Aorta (tissue), 5 donors: ENCODE measurements at regions of chr12 and their contacts with region 1.

Region 1: DNA sequence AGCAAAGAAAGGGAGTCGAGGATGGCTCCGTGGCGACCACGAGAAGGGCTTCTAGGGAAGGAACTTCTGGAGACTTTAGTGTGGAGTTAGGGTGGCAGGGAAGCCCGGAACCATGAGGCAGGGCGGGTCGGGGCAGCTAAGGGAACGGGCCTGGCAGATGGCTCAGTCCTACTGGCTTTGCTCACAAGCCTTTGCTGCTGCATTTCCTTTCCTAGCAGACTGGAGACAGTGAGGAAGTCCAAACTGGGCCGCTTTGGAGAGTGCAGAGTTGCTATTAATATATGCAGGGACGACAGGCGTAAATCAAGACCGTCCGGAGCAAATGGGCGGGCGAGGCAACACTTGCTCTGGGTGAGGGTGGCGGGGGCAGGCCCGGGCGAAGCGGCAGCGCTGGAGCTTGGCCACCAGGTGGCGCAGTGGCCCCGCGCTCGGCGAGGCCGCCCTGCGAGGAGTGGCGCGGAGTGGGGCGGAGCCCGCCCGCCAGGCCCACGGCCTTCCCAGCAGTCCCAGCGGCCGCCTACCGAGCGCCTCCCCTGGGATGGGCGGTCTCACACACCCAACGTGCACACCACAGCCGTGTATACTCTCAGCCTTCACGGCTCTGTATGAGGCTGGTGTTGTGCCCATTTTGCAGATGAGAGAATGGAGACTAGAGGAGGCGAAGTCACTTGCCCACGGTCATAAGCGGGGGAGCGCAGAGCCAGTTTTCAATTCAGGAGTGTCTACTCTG is 24.4 kb upstream of the LRTM2 start:
- DNase-seq: peak; percentile 97 to 98
- ATAC-seq: peak; percentile 96
- H3K4me3 ChIP-seq: peak overlapping the region; percentile 29
- H3K27ac ChIP-seq: no peak overlapping the region
- H3K4me1 ChIP-seq: no peaks in the 10 kb centered on the region
- H3K27me3 ChIP-seq: no peaks in the 10 kb centered on the region

Region 2: GRCh38 chr12:1830981-1831963 is 35.3 kb after region 1 on chr12:
- intact Hi-C with region 1: no loop called
- DNase-seq: peak; percentile 72 to 82
- ATAC-seq: peak; percentile 36
- H3K4me3 ChIP-seq: no peak overlapping the region
- H3K27ac ChIP-seq: no peak overlapping the region
- H3K4me1 ChIP-seq: no peaks in the 10 kb centered on the region
- H3K27me3 ChIP-seq: no peaks in the 10 kb centered on the region

Region 3: DNA sequence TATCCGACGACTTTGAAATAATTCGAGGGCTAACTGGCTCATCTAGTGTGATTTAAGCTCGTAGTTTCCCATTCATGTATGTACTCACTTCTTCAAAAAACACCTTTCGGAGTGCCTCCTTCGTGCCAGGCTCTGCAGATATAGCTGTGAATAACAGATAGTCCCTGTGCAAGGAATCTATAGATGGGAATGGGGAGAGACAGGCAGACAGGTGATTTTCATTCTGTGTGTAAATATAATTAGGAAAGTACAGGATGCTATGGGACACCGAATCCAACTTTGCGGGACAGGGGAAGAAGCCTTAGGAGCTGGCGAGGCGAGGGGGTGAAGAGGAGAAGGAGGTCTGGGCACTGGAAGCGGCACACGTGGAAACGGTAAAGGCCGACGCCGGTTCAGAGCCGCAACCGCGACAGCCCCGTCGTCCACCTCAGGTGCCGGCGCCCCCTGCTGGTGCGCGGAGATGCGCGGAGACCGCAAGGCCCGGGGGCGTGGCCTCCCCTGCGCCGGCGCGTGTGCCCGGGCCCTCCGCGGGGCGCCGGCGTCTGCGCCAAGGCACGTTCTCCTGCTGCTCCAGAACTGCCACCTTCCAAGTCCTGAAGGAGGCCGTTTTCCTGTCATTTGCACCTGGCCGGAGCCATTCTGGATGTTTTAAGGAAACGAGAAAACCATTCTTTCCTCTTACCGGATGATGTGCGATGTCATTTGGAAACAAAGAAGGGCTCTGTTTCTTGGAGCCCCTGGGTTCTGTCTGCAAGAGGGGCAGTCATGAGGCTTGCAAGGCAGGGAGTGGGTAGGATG is 238.9 kb after region 1 on chr12:
- intact Hi-C with region 1: loop called (anchors 1 to 5 kb)
- DNase-seq: peak; percentile 92 to 98
- ATAC-seq: peak; percentile 95
- H3K4me3 ChIP-seq: no peak overlapping the region
- H3K27ac ChIP-seq: no peak overlapping the region
- H3K4me1 ChIP-seq: no peaks in the 10 kb centered on the region
- H3K27me3 ChIP-seq: no peaks in the 10 kb centered on the region

Region 4: DNA sequence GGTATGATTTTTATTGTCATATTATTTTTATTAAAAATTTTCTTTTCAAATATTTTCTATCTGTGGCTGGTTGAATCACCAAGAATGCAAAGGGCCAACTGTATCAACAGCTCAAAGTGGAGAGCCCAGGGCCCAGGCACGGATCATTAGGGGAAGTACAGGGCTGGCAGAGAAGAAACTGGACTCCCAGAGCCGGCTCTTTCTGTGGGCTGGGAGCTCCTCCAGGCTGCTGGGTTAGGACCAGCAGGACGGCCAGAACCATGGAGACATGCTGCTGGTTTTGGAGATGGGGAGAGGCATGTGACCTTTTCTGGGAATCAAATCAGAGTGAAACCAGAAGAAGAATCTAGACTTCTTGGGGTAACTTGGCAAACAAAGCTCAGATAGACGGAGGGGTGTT is 477.3 kb after region 1 on chr12:
- intact Hi-C with region 1: loop called in 1 of 2 experiments (anchors 10 kb)
- DNase-seq: peak; percentile 82 to 85
- ATAC-seq: peak; percentile 84
- H3K4me3 ChIP-seq: no peak overlapping the region
- H3K27ac ChIP-seq: no peak overlapping the region
- H3K4me1 ChIP-seq: peaks cover 0 to 6% of the 10 kb centered on the region in 2 donors
- H3K27me3 ChIP-seq: no peaks in the 10 kb centered on the region